HepG2 (cell line): ENCODE measurements at regions of chr12 and their contacts with region 1.

Region 1: DNA sequence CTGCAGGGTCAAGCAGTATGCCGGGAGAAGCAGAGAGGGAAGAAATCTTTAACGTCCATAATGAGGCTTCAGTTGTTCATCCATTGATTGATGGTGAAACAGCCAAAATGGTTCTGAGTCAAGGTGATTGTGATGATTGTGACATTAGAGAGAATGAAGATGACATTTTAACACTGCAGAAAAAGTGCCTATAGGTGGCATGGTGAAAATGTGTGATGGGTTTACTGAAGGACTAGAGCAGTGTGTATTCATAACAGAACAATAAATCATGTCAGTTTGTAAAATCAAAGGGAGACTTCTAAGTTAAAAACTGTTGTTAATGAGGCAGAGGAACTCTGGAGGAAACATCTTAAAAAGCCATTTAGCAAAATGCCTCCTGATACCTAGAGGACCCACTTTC is 57.7 kb upstream of the CAND1 start:
- DNase-seq: no peak
- ATAC-seq: no peak
- H3K4me3 ChIP-seq: no peak overlapping the region
- H3K27ac ChIP-seq: no peak overlapping the region
- H3K4me1 ChIP-seq: peaks cover 12% of the 10 kb centered on the region
- H3K27me3 ChIP-seq: peaks cover 0 to 5% of the 10 kb centered on the region in 2 experiments; a peak in 1 of 5 replicates
- CTCF ChIP-seq: no peak
- EP300 ChIP-seq: no peak
- POLR2A ChIP-seq: no peak
- RAD21 ChIP-seq: no peak

Region 2: DNA sequence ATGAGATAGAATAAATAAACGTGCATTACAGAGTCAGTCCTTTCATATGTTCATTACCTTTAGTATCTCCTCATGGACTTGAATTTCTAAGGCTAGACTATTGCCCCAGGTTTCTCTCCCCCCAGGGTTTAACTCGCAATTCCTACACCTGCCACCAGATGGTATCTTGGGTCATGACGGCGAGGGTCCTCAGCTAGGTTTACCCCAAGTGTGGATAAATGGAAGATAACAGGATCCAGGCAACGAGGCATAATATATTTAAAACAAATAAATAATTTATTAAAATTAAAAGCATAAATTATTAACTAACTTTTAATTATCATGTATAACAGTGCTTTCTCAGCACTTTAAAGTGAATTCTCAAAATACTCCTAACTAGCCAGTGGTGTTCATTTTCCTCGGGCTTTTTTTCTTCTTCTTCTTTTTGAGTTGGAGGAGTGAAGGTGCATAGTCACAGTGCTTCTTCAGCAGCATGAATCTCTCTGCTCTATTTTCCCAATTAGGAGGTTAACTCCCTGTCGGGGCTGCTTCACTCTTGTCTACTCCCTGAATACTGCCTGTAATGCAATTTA is 185.9 kb before region 1 on chr12:
- CTCF ChIA-PET with region 1: no interaction called
- POLR2A ChIA-PET with region 1: no interaction called
- in situ Hi-C with region 1: loop called (anchors 10 kb)
- intact Hi-C with region 1: no loop called
- DNase-seq: peak; percentile 25
- ATAC-seq: peak; percentile 76
- H3K4me3 ChIP-seq: no peak overlapping the region
- H3K27ac ChIP-seq: no peak overlapping the region
- H3K4me1 ChIP-seq: no peaks in the 10 kb centered on the region
- H3K27me3 ChIP-seq: peaks cover 0 to 1% of the 10 kb centered on the region in 2 experiments; a peak in 1 of 5 replicates
- CTCF ChIP-seq: peak; percentile 60
- EP300 ChIP-seq: no peak
- POLR2A ChIP-seq: no peak
- RAD21 ChIP-seq: no peak

Region 3: DNA sequence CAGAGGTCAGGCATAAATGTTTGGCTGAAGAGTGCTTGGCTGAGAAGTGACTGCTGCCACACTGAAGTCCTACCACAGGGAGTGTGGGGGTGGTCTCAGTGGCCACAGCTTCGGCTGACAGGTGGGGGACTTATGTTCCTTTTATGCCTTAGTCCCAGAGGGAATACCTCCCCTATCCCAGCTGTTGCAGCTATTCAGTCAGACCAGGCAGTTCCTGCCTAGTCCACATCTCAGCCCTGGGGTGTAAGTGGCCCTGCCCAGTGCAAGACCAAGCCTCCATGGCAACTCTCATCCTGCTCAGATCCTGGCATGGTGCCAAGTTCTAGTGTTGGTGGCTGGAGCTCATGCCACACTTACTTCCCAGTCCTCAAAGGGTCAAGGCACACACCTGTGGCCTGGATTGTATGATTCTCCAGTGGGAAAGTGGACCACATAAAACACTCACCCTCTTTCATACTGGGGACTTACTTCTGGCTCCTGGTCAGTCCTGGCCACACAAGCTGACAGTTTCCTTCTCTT is 103.7 kb before region 1 on chr12:
- CTCF ChIA-PET with region 1: no interaction called
- POLR2A ChIA-PET with region 1: no interaction called
- in situ Hi-C with region 1: no loop called
- intact Hi-C with region 1: no loop called
- DNase-seq: no peak
- ATAC-seq: no peak
- H3K4me3 ChIP-seq: no peak overlapping the region
- H3K27ac ChIP-seq: no peak overlapping the region
- H3K4me1 ChIP-seq: no peaks in the 10 kb centered on the region
- H3K27me3 ChIP-seq: no peaks in the 10 kb centered on the region
- CTCF ChIP-seq: no peak
- EP300 ChIP-seq: no peak
- POLR2A ChIP-seq: no peak
- RAD21 ChIP-seq: no peak